ENCODE measurements at regions of chr2 and their contacts with region 1.

Region 1: GRCh38 chr2:30115141-30115980 is 31.4 kb upstream of the YPEL5 start:
- DNase-seq: peak; percentile 68 to 88
- ATAC-seq: peak; percentile 79 to 92
- H3K4me3 ChIP-seq: no peak overlapping the region
- H3K27ac ChIP-seq: 0 out of 6 replicates have a peak overlapping the region, but pooled peaks of 1 of the 2 experiments have one; percentile 8
- H3K4me1 ChIP-seq: peaks cover 23% of the 10 kb centered on the region
- CTCF ChIP-seq: peak; percentile 93
- EP300 ChIP-seq: no peak
- POLR2A ChIP-seq: no peak
- RAD21 ChIP-seq: peak; percentile 93 to 94

Region 2: GRCh38 chr2:29687121-29687520 is 428.2 kb before region 1 on chr2:
- CTCF ChIA-PET with region 1: no interaction called
- POLR2A ChIA-PET with region 1: no interaction called
- DNase-seq: no peak
- ATAC-seq: no peak
- H3K4me3 ChIP-seq: no peak overlapping the region
- H3K27ac ChIP-seq: no peak overlapping the region
- H3K4me1 ChIP-seq: no peaks in the 10 kb centered on the region
- CTCF ChIP-seq: no peak
- EP300 ChIP-seq: no peak
- POLR2A ChIP-seq: no peak
- RAD21 ChIP-seq: no peak

Region 3: GRCh38 chr2:30089171-30089570 is 26.2 kb before region 1 on chr2:
- CTCF ChIA-PET with region 1: interaction called, 108 read pairs
- POLR2A ChIA-PET with region 1: no interaction called
- DNase-seq: no peak
- ATAC-seq: no peak
- H3K4me3 ChIP-seq: no peak overlapping the region
- H3K27ac ChIP-seq: no peak overlapping the region
- H3K4me1 ChIP-seq: no peaks in the 10 kb centered on the region
- CTCF ChIP-seq: no peak
- EP300 ChIP-seq: no peak
- POLR2A ChIP-seq: no peak
- RAD21 ChIP-seq: no peak

Region 4: GRCh38 chr2:30098266-30099005 is 16.9 kb before region 1 on chr2:
- CTCF ChIA-PET with region 1: interaction called, 25 read pairs
- POLR2A ChIA-PET with region 1: no interaction called
- DNase-seq: no peak
- ATAC-seq: peak in 1 of 2 experiments; percentile 42; a peak in 1 of 6 replicates
- H3K4me3 ChIP-seq: no peak overlapping the region
- H3K27ac ChIP-seq: no peak overlapping the region
- H3K4me1 ChIP-seq: no peaks in the 10 kb centered on the region
- CTCF ChIP-seq: no peak
- EP300 ChIP-seq: no peak
- POLR2A ChIP-seq: no peak
- RAD21 ChIP-seq: no peak

Region 5: GRCh38 chr2:30127016-30127893 is 11.9 kb after region 1 on chr2:
- CTCF ChIA-PET with region 1: interaction called, 23 read pairs
- POLR2A ChIA-PET with region 1: no interaction called
- DNase-seq: peak in 1 of 2 experiments; percentile 27
- ATAC-seq: peak; percentile 26 to 64; a peak in 3 of 6 replicates
- H3K4me3 ChIP-seq: no peak overlapping the region
- H3K27ac ChIP-seq: no peak overlapping the region
- H3K4me1 ChIP-seq: peaks cover 6% of the 10 kb centered on the region; the same call in 2 of the 3 replicates
- CTCF ChIP-seq: no peak
- EP300 ChIP-seq: no peak
- POLR2A ChIP-seq: no peak
- RAD21 ChIP-seq: no peak

Measured in A549 (cell line).